Activated CD4-positive, alpha-beta memory T cell treated with anti-CD3 and anti-CD28 coated beads for 36 hours (primary cell): ENCODE measurements at regions of chr2 and their contacts with region 1.

Region 1: DNA sequence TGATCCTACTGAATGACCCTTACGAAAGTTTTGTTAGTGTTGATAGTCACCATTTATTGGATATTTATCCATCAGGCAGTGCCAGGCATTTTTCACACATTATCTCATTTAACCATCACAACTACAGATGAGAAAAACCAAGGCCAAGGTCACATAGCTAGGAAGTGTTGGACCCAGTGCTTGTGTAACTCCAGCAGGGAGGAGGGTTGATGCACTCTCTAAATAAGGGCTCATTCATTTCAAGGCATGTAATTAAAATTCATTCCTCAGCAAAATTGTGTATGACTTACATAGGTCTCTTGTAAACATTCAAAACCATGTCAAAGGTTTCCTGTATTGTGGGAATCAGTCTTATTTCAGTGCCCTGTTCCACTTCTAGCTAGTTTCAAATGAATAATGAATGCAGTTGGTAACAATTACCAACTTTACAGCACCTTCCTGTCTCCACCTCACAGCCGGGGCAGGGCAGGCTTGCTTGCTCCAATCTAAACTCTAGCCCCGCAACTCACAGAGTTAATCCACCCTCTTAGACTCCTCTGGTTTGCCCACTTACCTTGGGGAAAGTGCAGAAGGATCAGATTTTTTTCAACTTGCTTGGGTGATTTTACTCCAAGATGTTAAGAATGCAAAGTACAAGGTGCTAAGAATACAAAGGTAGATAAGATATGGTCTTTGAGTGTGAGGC is 5.8 kb upstream of the MAPRE3 start:
- DNase-seq: no peak
- H3K4me3 Mint-ChIP-seq: no peak overlapping the region
- H3K27ac Mint-ChIP-seq: no peak overlapping the region
- H3K4me1 Mint-ChIP-seq: peaks cover 7% of the 10 kb centered on the region
- H3K27me3 Mint-ChIP-seq: peaks cover 22% of the 10 kb centered on the region

Region 2: GRCh38 chr2:26982102-26982742 is 17.6 kb after region 1 on chr2:
- CTCF ChIA-PET with region 1: interaction called, 20 read pairs
- POLR2A ChIA-PET with region 1: no interaction called
- intact Hi-C with region 1: no loop called
- DNase-seq: peak; percentile 20
- H3K4me3 Mint-ChIP-seq: no peak overlapping the region
- H3K27ac Mint-ChIP-seq: no peak overlapping the region
- H3K4me1 Mint-ChIP-seq: no peaks in the 10 kb centered on the region
- H3K27me3 Mint-ChIP-seq: no peaks in the 10 kb centered on the region

Region 3: GRCh38 chr2:27042159-27042661 is 77.6 kb after region 1 on chr2:
- CTCF ChIA-PET with region 1: no interaction called
- POLR2A ChIA-PET with region 1: no interaction called
- intact Hi-C with region 1: no loop called
- DNase-seq: no peak
- H3K4me3 Mint-ChIP-seq: no peak overlapping the region
- H3K27ac Mint-ChIP-seq: peak overlapping the region; percentile 12
- H3K4me1 Mint-ChIP-seq: peaks cover 3% of the 10 kb centered on the region
- H3K27me3 Mint-ChIP-seq: no peaks in the 10 kb centered on the region